PC-9 (cell line): ENCODE measurements at regions of chr1 and their contacts with region 1.

Region 1: DNA sequence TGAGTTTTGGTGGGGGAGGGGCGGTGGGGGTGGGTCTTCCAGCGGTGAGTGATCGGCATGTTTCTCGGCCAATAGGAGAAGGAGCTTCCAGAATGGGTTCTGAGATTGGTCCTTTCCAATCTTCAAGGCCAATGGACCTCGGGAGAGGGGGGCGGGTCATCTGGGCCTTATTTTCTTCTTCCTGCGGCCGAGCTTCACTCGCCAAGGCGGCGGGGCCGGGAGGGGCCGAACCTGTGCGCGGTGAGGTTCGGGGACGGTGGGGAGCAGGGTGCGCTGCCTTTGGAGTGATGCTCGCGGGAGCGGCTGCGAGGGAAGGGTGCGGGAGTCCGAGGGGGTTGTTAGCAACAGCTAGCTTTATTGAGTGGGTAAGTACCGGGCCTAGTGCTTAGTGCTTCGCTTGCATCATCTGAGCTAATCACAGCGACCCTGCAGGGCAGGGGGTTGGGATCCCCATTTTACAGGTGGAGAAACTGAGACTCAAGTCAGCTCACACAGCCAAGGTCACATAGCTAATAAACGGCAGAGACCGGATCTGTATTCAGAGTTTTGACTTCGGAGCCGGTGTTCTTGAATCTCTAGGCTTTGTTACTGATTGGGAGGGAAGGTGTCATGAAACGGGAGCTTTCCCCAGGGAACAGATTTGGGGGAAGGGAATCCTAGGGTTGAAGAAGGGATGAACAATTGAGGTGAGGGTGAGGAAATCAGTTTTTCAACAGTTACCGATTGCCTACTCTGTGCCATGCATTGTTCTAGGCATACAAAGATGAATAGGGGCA is 549 bp downstream of the KDM4A start:
- DNase-seq: peak; percentile 92 to 95
- H3K4me3 ChIP-seq: peak overlapping the region; percentile 86
- H3K27ac ChIP-seq: peak overlapping the region; percentile 70
- H3K4me1 ChIP-seq: peaks cover 25% of the 10 kb centered on the region
- H3K27me3 ChIP-seq: no peaks in the 10 kb centered on the region
- CTCF ChIP-seq: no peak

Region 2: DNA sequence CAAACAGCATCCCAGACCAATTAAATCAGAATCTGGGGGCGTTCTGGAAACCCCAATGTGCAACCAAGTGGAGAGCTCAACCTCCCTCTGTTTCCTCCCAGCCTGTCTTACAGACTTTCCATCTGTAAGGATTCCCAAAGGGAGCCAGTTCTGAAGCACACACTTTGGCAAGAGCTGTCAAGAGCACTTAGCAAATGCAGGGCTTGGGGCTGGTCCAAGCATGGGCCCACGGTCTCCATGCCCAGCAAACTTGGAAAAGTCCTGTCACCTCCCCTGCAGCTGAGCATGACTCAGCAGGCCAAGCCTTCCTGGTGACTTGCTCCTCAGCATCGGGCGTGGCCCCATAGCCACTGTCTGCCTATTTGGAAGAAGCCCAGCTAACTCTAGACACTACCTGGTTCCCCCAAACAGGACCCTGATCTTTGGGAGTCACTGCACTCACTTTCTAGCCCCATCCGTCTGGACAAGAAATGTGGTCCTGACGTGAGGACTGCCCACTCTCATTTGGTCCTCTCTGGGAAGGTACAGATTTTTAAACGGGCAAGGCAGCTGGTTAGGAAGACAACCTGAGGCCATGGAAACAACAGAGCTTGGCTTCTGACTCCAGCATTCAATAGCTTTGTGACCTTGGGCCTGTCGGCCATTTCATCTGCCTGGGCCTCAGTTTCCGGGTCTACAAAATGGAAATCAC is 708.7 kb before region 1 on chr1:
- CTCF ChIA-PET with region 1: no interaction called
- POLR2A ChIA-PET with region 1: interaction called, 3 read pairs
- intact Hi-C with region 1: loop called (anchors 5 kb)
- DNase-seq: peak; percentile 92 to 93
- H3K4me3 ChIP-seq: peak overlapping the region; percentile 28; the same call in 1 of the 2 replicates
- H3K27ac ChIP-seq: peak overlapping the region; percentile 99
- H3K4me1 ChIP-seq: peaks cover 98% of the 10 kb centered on the region
- H3K27me3 ChIP-seq: no peaks in the 10 kb centered on the region
- CTCF ChIP-seq: no peak

Region 3: GRCh38 chr1:43537423-43538159 is 112.9 kb before region 1 on chr1:
- CTCF ChIA-PET with region 1: interaction called, 11 read pairs
- POLR2A ChIA-PET with region 1: interaction called, 7 read pairs
- intact Hi-C with region 1: no loop called
- DNase-seq: peak; percentile 74 to 76
- H3K4me3 ChIP-seq: no peak overlapping the region
- H3K27ac ChIP-seq: peak overlapping the region; percentile 72
- H3K4me1 ChIP-seq: peaks cover 56% of the 10 kb centered on the region
- H3K27me3 ChIP-seq: no peaks in the 10 kb centered on the region
- CTCF ChIP-seq: no peak

Region 4: DNA sequence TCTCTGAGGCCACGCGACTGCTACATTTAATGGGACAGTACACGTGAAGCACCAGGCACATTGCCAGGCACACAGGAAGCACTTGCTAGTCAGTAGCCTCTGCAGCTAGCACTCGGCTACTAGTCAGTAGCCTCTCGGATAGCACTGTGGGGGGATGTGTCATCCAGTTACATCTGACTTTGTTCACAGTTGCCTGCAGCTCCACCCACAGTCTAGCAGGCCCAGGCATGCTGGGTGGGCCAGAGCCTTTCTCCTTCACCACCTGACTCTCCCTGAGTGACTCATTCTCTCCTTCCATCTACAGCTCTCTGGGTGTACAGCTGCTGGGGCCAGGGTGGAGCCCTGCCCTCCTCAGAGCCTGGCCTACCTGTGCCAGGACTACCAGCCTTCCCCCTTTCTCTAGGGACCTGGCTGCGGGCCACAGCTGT is 68.3 kb before region 1 on chr1:
- CTCF ChIA-PET with region 1: interaction called, 3 read pairs
- POLR2A ChIA-PET with region 1: interaction called, 15 read pairs
- intact Hi-C with region 1: loop called (anchors 2 kb)
- DNase-seq: peak; percentile 91 to 93
- H3K4me3 ChIP-seq: no peak overlapping the region
- H3K27ac ChIP-seq: peak overlapping the region; percentile 21; the same call in 1 of the 2 replicates
- H3K4me1 ChIP-seq: peaks cover 14% of the 10 kb centered on the region
- H3K27me3 ChIP-seq: no peaks in the 10 kb centered on the region
- CTCF ChIP-seq: no peak

Region 5: GRCh38 chr1:43836267-43836951 is 185.9 kb after region 1 on chr1:
- CTCF ChIA-PET with region 1: no interaction called
- POLR2A ChIA-PET with region 1: interaction called, 10 read pairs
- intact Hi-C with region 1: no loop called
- DNase-seq: peak; percentile 68 to 95
- H3K4me3 ChIP-seq: no peak overlapping the region
- H3K27ac ChIP-seq: peak overlapping the region; percentile 94
- H3K4me1 ChIP-seq: peaks cover 62% of the 10 kb centered on the region
- H3K27me3 ChIP-seq: no peaks in the 10 kb centered on the region
- CTCF ChIP-seq: no peak

Region 6: DNA sequence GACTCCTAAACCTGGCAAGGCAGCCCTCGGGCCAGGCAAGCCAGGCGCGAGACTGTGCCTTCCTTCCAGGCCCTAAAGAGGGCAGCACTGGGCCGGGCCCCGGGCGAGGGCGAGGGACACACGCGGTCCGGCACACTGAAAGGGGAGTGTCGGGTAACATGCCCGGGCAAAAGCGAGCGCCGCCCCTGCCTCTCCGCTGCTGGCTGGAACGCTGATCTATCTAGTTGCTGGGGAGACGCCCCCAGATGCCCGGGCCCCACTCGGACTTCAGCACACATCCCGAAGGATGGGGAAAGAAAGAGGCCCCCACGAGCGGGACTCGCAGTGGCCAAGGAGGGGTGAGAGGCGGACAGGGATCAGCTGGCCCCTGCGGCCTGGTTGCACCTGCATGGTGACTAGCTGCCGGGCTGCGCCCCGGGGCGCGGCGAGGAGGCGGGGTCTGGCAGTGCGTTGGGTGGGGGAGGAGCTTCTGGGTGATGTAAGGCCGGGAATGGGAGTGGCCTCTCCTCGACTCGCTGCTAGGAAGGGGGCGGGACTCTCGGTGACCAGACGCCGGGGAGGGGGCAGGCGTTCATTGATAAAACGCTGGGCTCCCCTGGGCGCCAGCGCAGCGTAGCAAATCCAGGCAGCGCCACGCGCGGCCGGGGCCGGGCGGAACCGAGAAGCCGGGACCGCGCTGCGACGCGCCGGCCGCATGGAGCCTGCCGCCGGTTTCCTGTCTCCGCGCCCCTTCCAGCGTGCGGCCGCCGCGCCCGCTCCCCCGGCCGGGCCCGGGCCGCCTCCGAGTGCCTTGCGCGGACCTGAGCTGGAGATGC is 1149.5 kb after region 1 on chr1 and contains the start of gene PLK3:
- CTCF ChIA-PET with region 1: no interaction called
- POLR2A ChIA-PET with region 1: interaction called, 10 read pairs
- intact Hi-C with region 1: no loop called
- DNase-seq: peak; percentile 88 to 99
- H3K4me3 ChIP-seq: peak within 1 kb of the TSS; percentile 82
- H3K27ac ChIP-seq: peak within 1 kb of the TSS; percentile 81
- H3K4me1 ChIP-seq: peaks cover 45% of the 10 kb centered on the region
- H3K27me3 ChIP-seq: no peaks in the 10 kb centered on the region
- CTCF ChIP-seq: peak; percentile 88
- total RNA-seq, gene PLK3: 12.7 and 13.0 TPM in 2 replicates